Caco-2 (cell line): ENCODE measurements at regions of chr17 and their contacts with region 1.

Region 1: GRCh38 chr17:17041571-17042380 is 481 bp upstream of the MPRIP start:
- DNase-seq: peak; percentile 100
- H3K4me3 ChIP-seq: peak overlapping the region; percentile 50
- H3K4me3 Mint-ChIP-seq: peak overlapping the region; percentile 68
- H3K27ac Mint-ChIP-seq: peak overlapping the region; percentile 49
- H3K4me1 ChIP-seq: peaks cover 26% of the 10 kb centered on the region
- H3K4me1 Mint-ChIP-seq: peaks cover 33% of the 10 kb centered on the region
- H3K27me3 ChIP-seq: no peaks in the 10 kb centered on the region
- H3K27me3 Mint-ChIP-seq: no peaks in the 10 kb centered on the region
- CTCF ChIP-seq: no peak

Region 2: DNA sequence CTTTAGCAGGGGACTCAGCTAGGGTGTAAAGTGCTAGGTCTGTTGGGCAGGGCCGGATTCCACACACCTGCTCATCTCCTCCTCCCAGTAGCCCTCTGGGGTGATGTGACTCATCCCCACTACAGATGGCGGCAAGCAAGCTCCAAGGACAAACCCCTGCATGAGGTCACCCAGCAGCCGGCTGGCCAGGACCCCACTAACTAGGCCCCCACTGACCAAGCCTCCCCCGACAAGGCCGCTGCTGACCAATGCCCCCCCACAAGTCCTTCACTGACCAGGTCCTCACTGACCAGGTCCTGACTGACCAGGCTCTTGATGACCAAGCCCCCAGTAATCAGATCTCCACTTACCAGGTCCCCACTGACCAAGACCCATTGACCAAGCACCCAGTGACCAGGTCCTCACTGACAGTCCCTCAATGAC is 106.5 kb before region 1 on chr17:
- CTCF ChIA-PET with region 1: no interaction called
- POLR2A ChIA-PET with region 1: no interaction called
- intact Hi-C with region 1: no loop called
- DNase-seq: peak in 1 of 2 experiments; percentile 28
- H3K4me3 ChIP-seq: no peak overlapping the region
- H3K4me3 Mint-ChIP-seq: no peak overlapping the region
- H3K27ac Mint-ChIP-seq: no peak overlapping the region
- H3K4me1 ChIP-seq: no peaks in the 10 kb centered on the region
- H3K4me1 Mint-ChIP-seq: no peaks in the 10 kb centered on the region
- H3K27me3 ChIP-seq: no peaks in the 10 kb centered on the region; the same call in 1 of the 2 replicates
- H3K27me3 Mint-ChIP-seq: peaks cover 7% of the 10 kb centered on the region
- CTCF ChIP-seq: no peak

Region 3: DNA sequence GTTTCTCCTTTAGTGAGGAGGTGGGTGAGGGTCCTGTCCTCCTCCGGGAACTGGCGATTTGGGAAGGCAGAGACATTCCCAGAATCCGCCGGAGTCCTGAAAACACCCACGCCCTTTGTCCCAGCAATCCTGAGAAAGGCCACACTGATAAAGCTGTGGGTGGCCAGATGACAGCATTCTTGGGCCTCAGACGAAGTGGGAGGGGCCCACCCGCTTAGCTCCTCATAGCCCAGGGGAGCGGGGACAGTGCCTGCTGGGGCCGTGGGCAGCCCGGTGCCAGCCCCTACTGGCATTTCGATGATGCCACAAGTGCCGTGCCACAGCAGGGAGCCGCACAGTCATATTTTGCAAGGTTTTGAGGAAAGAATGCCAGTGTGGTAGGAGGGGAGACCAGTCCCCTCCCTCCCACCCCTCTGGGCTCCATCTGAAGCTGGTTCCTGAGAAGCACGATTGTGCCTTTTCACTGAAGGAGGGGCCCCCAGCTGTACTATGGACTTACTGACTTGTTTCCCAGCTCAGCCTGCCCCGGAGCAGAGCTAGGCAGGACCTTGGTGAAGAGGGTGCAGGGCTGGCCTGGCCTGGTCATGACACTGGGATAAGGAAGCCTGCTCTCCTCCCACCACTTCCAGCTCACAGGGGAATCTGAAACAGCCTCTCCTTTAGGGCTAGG is 20.4 kb before region 1 on chr17:
- CTCF ChIA-PET with region 1: interaction called, 10 read pairs
- POLR2A ChIA-PET with region 1: interaction called, 22 read pairs
- intact Hi-C with region 1: no loop called
- DNase-seq: peak; percentile 85 to 94
- H3K4me3 ChIP-seq: no peak overlapping the region; the same call in 1 of the 2 replicates
- H3K4me3 Mint-ChIP-seq: peak overlapping the region; percentile 51
- H3K27ac Mint-ChIP-seq: peak overlapping the region; percentile 94
- H3K4me1 ChIP-seq: peaks cover 57% of the 10 kb centered on the region
- H3K4me1 Mint-ChIP-seq: peaks cover 60% of the 10 kb centered on the region
- H3K27me3 ChIP-seq: no peaks in the 10 kb centered on the region
- H3K27me3 Mint-ChIP-seq: no peaks in the 10 kb centered on the region
- CTCF ChIP-seq: no peak

Region 4: DNA sequence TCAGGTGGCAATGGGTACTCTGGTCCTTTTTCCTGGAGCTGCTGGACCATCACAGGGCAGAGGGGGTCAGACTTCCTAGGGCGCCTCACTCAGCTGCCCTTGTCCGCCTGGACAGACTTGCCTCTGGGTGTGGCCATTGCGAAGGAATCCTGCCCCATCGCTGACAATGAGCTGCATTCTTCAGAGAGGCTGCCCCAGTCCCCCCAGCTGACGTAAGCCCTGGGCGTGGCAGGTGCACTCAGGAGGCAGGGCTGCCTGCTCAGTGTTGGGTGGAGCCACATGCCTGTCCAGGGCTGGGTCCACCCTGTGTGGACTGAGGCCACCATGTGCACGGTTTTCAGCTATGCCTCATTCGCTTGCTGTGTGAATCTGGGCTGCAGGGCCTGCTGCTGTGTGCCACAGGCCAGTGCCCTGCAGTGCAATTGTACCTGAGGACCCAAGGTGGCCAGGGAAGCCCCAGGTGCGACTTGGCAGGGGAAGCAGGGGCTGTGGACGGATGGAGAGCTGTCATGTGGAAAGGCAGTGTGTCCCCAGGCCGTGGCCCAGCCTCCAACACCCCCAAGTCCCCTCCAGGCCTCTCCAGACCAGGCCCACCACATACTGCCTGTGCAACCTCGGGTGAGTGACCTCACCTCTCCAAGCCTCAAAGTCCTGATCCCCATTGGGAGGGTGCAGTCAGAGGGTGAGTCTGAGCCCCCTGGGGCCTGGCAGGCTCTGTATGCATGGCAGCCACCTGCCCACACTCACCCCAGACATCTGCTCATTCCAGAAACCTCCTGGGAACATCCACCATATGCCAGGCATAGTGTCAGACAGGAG is 13.5 kb before region 1 on chr17:
- CTCF ChIA-PET with region 1: interaction called, 29 read pairs
- POLR2A ChIA-PET with region 1: interaction called, 23 read pairs
- intact Hi-C with region 1: loop called (anchors 1 kb)
- DNase-seq: peak; percentile 99 to 100
- H3K4me3 ChIP-seq: peak overlapping the region; percentile 24
- H3K4me3 Mint-ChIP-seq: peak overlapping the region; percentile 69
- H3K27ac Mint-ChIP-seq: peak overlapping the region; percentile 99
- H3K4me1 ChIP-seq: peaks cover 49% of the 10 kb centered on the region
- H3K4me1 Mint-ChIP-seq: peaks cover 53% of the 10 kb centered on the region
- H3K27me3 ChIP-seq: no peaks in the 10 kb centered on the region
- H3K27me3 Mint-ChIP-seq: no peaks in the 10 kb centered on the region
- CTCF ChIP-seq: peak in 1 of 2 experiments; percentile 46

Region 5: GRCh38 chr17:17063546-17064122 is 21.9 kb after region 1 on chr17:
- CTCF ChIA-PET with region 1: no interaction called
- POLR2A ChIA-PET with region 1: interaction called, 6 read pairs
- intact Hi-C with region 1: loop called (anchors 2 kb)
- DNase-seq: no peak
- H3K4me3 ChIP-seq: no peak overlapping the region
- H3K4me3 Mint-ChIP-seq: no peak overlapping the region
- H3K27ac Mint-ChIP-seq: peak overlapping the region; percentile 51
- H3K4me1 ChIP-seq: peaks cover 19% of the 10 kb centered on the region
- H3K4me1 Mint-ChIP-seq: peaks cover 24% of the 10 kb centered on the region
- H3K27me3 ChIP-seq: no peaks in the 10 kb centered on the region
- H3K27me3 Mint-ChIP-seq: no peaks in the 10 kb centered on the region
- CTCF ChIP-seq: no peak

Region 6: DNA sequence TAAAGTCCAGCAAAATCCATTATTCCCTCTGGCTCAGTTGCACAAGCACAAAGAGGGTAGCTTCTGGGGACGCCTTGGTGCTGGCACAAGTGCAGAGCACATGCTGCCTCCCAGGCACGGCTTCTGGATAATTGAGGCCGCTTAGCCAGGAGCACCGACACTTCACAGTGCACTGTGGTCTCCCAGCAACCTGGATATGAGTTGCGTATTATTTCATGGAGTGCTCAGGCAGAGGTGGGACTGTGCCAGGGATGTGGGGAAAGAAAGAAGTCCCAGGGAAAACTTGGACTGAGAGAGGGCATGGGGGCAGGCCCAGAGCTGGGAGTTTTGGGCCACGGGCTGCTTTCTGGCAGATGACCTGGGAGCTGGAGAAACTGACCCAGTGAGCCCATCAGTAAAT is 38.0 kb after region 1 on chr17:
- CTCF ChIA-PET with region 1: no interaction called
- POLR2A ChIA-PET with region 1: interaction called, 3 read pairs
- intact Hi-C with region 1: loop called (anchors 1 kb)
- DNase-seq: no peak
- H3K4me3 ChIP-seq: no peak overlapping the region
- H3K4me3 Mint-ChIP-seq: no peak overlapping the region
- H3K27ac Mint-ChIP-seq: peak overlapping the region; percentile 74
- H3K4me1 ChIP-seq: peaks cover 40% of the 10 kb centered on the region
- H3K4me1 Mint-ChIP-seq: peaks cover 48% of the 10 kb centered on the region
- H3K27me3 ChIP-seq: no peaks in the 10 kb centered on the region
- H3K27me3 Mint-ChIP-seq: no peaks in the 10 kb centered on the region
- CTCF ChIP-seq: no peak

Region 7: DNA sequence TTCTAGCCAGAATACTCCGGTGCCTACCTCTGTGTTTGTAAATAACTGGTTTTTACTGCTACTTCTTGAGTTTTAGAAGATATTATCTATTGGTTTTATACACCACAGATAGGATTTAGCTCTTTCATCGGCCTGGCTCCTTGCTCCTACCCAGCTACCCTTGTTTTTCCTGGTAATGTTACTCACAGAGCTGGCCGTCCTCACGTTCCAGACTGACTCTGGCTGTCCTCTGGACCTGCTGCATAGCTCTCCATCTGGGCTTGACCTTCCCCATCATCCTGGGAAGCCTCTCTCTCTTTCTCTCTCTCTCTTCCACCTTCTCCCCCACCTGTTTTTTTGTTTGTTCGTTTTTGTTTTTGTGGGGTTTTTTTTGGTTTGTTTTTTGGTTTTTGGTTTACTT is 52.0 kb after region 1 on chr17:
- CTCF ChIA-PET with region 1: no interaction called
- POLR2A ChIA-PET with region 1: no interaction called
- intact Hi-C with region 1: loop called (anchors 2 kb)
- DNase-seq: no peak
- H3K4me3 ChIP-seq: no peak overlapping the region
- H3K4me3 Mint-ChIP-seq: no peak overlapping the region
- H3K27ac Mint-ChIP-seq: peak overlapping the region; percentile 16
- H3K4me1 ChIP-seq: peaks cover 41% of the 10 kb centered on the region
- H3K4me1 Mint-ChIP-seq: peaks cover 27% of the 10 kb centered on the region
- H3K27me3 ChIP-seq: no peaks in the 10 kb centered on the region
- H3K27me3 Mint-ChIP-seq: no peaks in the 10 kb centered on the region
- CTCF ChIP-seq: no peak

Region 8: GRCh38 chr17:17206124-17206912 is 164.5 kb after region 1 on chr17 and contains the start of gene PLD6:
- CTCF ChIA-PET with region 1: no interaction called
- POLR2A ChIA-PET with region 1: no interaction called
- intact Hi-C with region 1: loop called (anchors 1 kb)
- DNase-seq: peak; percentile 96
- H3K4me3 ChIP-seq: peak within 1 kb of the TSS; percentile 79
- H3K4me3 Mint-ChIP-seq: peak within 1 kb of the TSS; percentile 81
- H3K27ac Mint-ChIP-seq: peak within 1 kb of the TSS; percentile 83
- H3K4me1 ChIP-seq: peaks cover 7% of the 10 kb centered on the region; the same call in 1 of the 2 replicates
- H3K4me1 Mint-ChIP-seq: peaks cover 5% of the 10 kb centered on the region
- H3K27me3 ChIP-seq: no peaks in the 10 kb centered on the region
- H3K27me3 Mint-ChIP-seq: no peaks in the 10 kb centered on the region
- CTCF ChIP-seq: no peak
- total RNA-seq, gene PLD6: 7.1 and 8.0 TPM in 2 replicates